Testis (tissue), 5 donors: ENCODE measurements at regions of chr3 and their contacts with region 1.

Region 1: GRCh38 chr3:46700772-46701171 is 420 bp upstream of the TMIE start:
- DNase-seq: no peak
- H3K4me3 ChIP-seq: peak overlapping the region; percentile 21 to 31
- H3K27ac ChIP-seq: no peak overlapping the region
- H3K4me1 ChIP-seq: peaks cover 38% of the 10 kb centered on the region
- H3K27me3 ChIP-seq: no peaks in the 10 kb centered on the region
- CTCF ChIP-seq: no peak
- POLR2A ChIP-seq: no peak

Region 2: GRCh38 chr3:46903331-46904071 is 202.7 kb after region 1 on chr3:
- intact Hi-C with region 1: loop called (anchors 5 kb)
- DNase-seq: no peak
- H3K4me3 ChIP-seq: no peak overlapping the region
- H3K27ac ChIP-seq: no peak overlapping the region
- H3K4me1 ChIP-seq: peaks cover 7% of the 10 kb centered on the region
- H3K27me3 ChIP-seq: no peaks in the 10 kb centered on the region
- CTCF ChIP-seq: no peak
- POLR2A ChIP-seq: no peak